Sigmoid colon (tissue), 7 donors: ENCODE measurements at regions of chr1 and their contacts with region 1.

Region 1: GRCh38 chr1:159854693-159855192 is 7.7 kb downstream of the VSIG8 start:
- DNase-seq: peak; percentile 93
- H3K4me3 ChIP-seq: peak overlapping the region; percentile 57 to 73 (median 68)
- H3K27ac ChIP-seq: peak overlapping the region; percentile 91 to 97 (median 96)
- H3K4me1 ChIP-seq: peaks cover 0 to 26% (median 21%) of the 10 kb centered on the region in 4 donors
- H3K27me3 ChIP-seq: no peaks in the 10 kb centered on the region
- CTCF ChIP-seq: peak in 1 of 4 experiments; percentile 9
- EP300 ChIP-seq: no peak
- POLR2A ChIP-seq: peak in 1 of 2 donors; percentile 57

Region 2: DNA sequence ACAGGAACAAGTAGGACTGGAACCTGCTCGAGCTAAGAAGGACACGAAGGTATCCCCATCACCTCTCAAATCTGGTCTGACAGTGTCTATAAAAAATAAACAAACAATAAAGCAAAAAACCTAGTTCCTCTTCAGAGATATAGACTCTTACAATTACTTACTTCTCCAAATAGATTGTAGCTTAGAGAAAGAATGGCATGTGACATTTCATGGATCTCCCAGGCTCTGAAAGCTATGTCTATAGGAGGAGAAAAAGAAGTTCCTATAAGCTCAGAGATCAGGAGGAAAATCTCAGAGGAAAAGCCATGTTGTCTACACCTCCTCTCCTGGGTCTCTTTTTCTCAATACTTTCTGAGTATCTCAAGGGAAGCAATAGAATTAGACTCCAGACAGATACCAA is 306.6 kb before region 1 on chr1:
- intact Hi-C with region 1: no loop called
- DNase-seq: no peak
- H3K4me3 ChIP-seq: no peak overlapping the region
- H3K27ac ChIP-seq: no peak overlapping the region
- H3K4me1 ChIP-seq: no peaks in the 10 kb centered on the region
- H3K27me3 ChIP-seq: no peaks in the 10 kb centered on the region
- CTCF ChIP-seq: no peak
- EP300 ChIP-seq: no peak
- POLR2A ChIP-seq: no peak

Region 3: GRCh38 chr1:159719990-159720389 is 134.8 kb before region 1 on chr1:
- intact Hi-C with region 1: no loop called
- DNase-seq: no peak
- H3K4me3 ChIP-seq: no peak overlapping the region
- H3K27ac ChIP-seq: no peak overlapping the region
- H3K4me1 ChIP-seq: no peaks in the 10 kb centered on the region
- H3K27me3 ChIP-seq: no peaks in the 10 kb centered on the region
- CTCF ChIP-seq: no peak
- EP300 ChIP-seq: no peak
- POLR2A ChIP-seq: no peak

Region 4: GRCh38 chr1:159839116-159839849 is 15.5 kb before region 1 on chr1:
- intact Hi-C with region 1: no loop called
- DNase-seq: no peak
- H3K4me3 ChIP-seq: no peak overlapping the region
- H3K27ac ChIP-seq: no peak overlapping the region
- H3K4me1 ChIP-seq: peaks cover 0 to 5% (median 0%) of the 10 kb centered on the region in 4 donors
- H3K27me3 ChIP-seq: no peaks in the 10 kb centered on the region
- CTCF ChIP-seq: no peak
- EP300 ChIP-seq: no peak
- POLR2A ChIP-seq: no peak

Region 5: DNA sequence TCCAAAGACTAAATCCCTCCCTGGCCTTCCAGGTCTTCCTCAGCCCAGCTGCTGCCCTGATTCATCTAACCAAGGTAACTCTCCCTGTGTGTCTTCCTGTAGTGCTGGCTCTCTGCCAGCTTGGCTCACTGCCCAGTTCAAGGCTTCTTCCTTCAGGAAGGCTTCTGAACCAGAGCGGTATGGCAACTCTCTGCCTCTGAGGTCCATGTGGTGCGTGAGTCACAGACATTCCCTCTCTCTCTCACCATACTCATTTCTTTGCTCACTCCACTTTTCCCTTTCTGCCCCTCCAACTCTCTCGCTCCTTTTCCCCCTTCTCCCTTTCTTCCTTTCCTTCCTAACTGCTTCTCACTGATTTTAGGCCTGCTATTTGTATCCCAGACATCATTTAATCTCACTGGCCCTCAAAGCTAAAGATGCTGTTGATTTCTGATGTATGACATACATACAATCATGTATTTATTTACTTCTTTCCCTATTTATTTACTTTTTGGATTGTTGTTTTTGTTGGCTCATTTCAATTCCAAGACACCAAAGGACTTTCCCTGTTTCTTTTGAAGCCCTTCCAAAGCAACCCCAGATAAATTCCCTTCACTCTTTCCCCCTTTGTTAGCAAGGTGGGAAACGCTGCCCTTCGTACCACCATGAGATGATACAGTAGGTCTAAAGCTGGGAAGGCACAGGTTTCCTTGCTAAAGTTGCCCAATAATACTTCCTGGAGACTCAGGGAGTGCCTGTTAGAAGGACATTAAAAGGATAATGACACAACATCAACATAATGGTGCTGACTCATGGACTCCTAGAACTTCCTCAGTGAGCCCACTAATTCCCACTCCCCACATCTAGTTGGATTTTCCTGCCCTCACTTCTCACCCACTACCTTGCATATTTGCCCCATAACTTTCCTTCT is 27.4 kb after region 1 on chr1:
- intact Hi-C with region 1: loop called (anchors 5 kb)
- DNase-seq: peak; percentile 82
- H3K4me3 ChIP-seq: no peak overlapping the region
- H3K27ac ChIP-seq: no peak overlapping the region
- H3K4me1 ChIP-seq: no peaks in the 10 kb centered on the region
- H3K27me3 ChIP-seq: no peaks in the 10 kb centered on the region
- CTCF ChIP-seq: no peak
- EP300 ChIP-seq: no peak
- POLR2A ChIP-seq: no peak

Region 6: DNA sequence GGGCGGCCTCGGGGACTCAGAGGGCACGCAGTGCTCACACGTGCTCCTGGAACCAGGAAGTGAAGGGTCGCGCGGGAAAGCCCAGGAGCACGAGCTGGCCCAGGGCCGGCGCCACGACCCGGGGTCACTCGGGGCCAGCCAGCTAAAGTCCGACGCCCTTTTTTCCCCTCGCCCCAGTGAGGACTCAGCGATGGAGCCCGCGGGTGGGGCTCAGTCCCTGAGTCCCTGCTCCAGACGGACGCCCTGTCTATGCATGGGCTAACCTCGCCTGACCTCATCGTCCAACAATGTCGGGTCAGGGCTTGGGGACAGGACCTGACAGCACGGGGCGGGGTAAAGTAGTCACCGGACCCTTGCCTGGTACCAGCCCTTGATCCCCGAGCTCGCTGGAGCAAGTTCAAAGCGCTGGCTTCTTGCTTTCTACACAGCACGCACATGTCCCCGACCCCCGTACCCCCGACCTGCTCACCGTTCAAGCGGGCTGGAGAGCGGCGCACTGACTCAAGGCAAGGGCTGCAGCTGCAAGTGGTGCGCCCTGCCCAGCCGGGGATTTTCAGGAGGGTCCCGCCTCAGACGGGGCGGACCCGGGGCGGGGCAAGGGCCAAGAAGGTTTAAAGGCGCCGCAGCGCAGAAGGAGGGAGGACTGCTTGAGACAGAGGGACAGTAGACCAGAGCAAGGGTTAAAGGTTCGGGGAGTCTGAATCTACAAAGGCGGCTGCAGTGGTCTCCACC is 70.4 kb after region 1 on chr1 and contains the start of gene TAGLN2:
- intact Hi-C with region 1: loop called (anchors 2 kb)
- DNase-seq: peak; percentile 96
- H3K4me3 ChIP-seq: peak within 1 kb of the TSS; percentile 70 to 80 (median 76)
- H3K27ac ChIP-seq: peak within 1 kb of the TSS; percentile 86 to 98 (median 95)
- H3K4me1 ChIP-seq: peaks cover 0 to 43% (median 34%) of the 10 kb centered on the region in 4 donors
- H3K27me3 ChIP-seq: no peaks in the 10 kb centered on the region
- CTCF ChIP-seq: no peak
- EP300 ChIP-seq: peak in 1 of 4 donors; percentile 24
- POLR2A ChIP-seq: peak; percentile 82 to 94
- total RNA-seq, gene TAGLN2: 88.8 to 109 (median 99.0) TPM